ENCODE measurements at regions of chrX and their contacts with region 1.

Region 1: DNA sequence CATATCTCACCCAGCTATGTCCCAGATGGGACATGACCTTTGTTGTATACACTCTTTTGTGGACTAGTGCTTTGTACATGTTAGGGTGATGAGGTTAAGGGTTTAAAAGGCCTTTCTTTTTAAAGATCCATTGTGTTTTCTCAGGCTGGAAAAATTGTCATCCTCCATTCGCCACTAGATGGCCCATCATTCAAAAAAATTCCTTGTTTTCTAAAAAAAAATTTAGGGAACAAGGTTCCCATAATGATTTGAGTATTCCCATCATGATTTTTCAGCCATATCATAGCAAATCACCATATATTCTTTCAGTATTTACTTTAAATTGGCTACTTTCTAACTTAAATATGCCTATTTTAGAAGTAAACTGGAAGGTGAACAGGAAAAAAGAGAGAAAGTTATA is 91.9 kb upstream of the TMEM164 start:
- DNase-seq: no peak
- H3K4me3 ChIP-seq: no peak overlapping the region
- H3K4me3 Mint-ChIP-seq: no peak overlapping the region
- H3K27ac Mint-ChIP-seq: no peak overlapping the region
- H3K4me1 ChIP-seq: peaks cover 5% of the 10 kb centered on the region; the same call in 1 of the 2 replicates
- H3K4me1 Mint-ChIP-seq: no peaks in the 10 kb centered on the region
- H3K27me3 ChIP-seq: no peaks in the 10 kb centered on the region
- H3K27me3 Mint-ChIP-seq: no peaks in the 10 kb centered on the region
- CTCF ChIP-seq: peak; percentile 9 to 43

Region 2: GRCh38 chrX:109472939-109473735 is 437.9 kb before region 1 on chrX:
- CTCF ChIA-PET with region 1: no interaction called
- POLR2A ChIA-PET with region 1: no interaction called
- intact Hi-C with region 1: no loop called
- DNase-seq: peak in 1 of 2 experiments; percentile 15
- H3K4me3 ChIP-seq: no peak overlapping the region
- H3K4me3 Mint-ChIP-seq: no peak overlapping the region
- H3K27ac Mint-ChIP-seq: no peak overlapping the region
- H3K4me1 ChIP-seq: no peaks in the 10 kb centered on the region
- H3K4me1 Mint-ChIP-seq: no peaks in the 10 kb centered on the region
- H3K27me3 ChIP-seq: no peaks in the 10 kb centered on the region
- H3K27me3 Mint-ChIP-seq: no peaks in the 10 kb centered on the region
- CTCF ChIP-seq: no peak

Region 3: DNA sequence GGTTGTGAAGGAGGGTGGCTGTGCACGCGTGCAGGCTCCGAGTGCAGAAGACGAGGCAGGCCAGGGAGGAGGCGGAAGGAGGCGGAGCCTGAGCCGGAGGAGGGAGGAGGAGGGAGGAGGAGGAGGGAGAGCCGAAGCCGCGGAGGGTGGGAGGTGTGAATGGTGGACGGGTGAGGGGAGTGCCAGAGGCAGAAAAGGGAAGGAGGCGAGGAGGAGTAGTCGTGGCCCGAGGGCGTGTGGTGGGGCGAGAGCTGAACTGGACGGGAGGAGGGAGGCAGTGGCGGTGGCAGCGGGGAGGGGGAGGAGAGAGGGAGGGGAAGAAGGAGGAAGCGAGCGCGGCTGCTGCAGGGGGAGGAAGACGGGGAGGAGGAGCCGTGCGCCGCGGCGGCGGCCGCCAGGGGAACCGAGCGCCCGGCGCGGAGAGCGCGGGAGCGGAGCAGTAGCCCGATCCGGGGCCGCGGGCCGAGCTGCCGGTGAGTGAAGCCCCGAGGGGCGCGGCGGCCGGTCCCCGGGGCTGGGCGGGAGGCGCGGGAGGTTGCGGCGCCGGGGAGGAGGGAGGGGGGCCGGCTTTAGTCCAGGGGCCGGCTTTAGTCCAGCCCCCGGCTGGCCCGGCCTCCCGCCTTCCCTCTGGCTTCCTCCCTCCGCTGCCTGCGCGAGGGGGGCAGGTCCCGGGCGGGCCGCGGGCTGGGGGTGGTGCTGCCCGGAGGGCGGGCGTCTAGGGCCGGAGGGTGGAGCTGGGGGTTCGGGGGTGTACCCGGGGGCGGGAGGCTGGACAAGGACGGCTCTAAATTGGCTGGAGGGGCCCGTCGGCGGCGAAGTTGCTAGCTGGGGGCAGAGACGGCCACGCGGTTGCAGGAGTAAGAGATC is 91.5 kb after region 1 on chrX and contains the start of gene TMEM164:
- CTCF ChIA-PET with region 1: no interaction called
- POLR2A ChIA-PET with region 1: no interaction called
- intact Hi-C with region 1: loop called (anchors 5 kb)
- DNase-seq: peak; percentile 76 to 79
- H3K4me3 ChIP-seq: peak within 1 kb of the TSS; percentile 77
- H3K4me3 Mint-ChIP-seq: peak within 1 kb of the TSS; percentile 97
- H3K27ac Mint-ChIP-seq: peak within 1 kb of the TSS; percentile 84
- H3K4me1 ChIP-seq: no peaks in the 10 kb centered on the region
- H3K4me1 Mint-ChIP-seq: peaks cover 7% of the 10 kb centered on the region
- H3K27me3 ChIP-seq: no peaks in the 10 kb centered on the region
- H3K27me3 Mint-ChIP-seq: no peaks in the 10 kb centered on the region
- CTCF ChIP-seq: no peak
- total RNA-seq, gene TMEM164: 25.6 and 26.2 TPM in 2 replicates

Region 4: GRCh38 chrX:110036162-110037033 is 125.4 kb after region 1 on chrX:
- CTCF ChIA-PET with region 1: interaction called, 4 read pairs
- POLR2A ChIA-PET with region 1: no interaction called
- intact Hi-C with region 1: loop called (anchors 5 kb)
- DNase-seq: peak; percentile 60 to 66
- H3K4me3 ChIP-seq: no peak overlapping the region
- H3K4me3 Mint-ChIP-seq: peak overlapping the region; percentile 31
- H3K27ac Mint-ChIP-seq: peak overlapping the region; percentile 44
- H3K4me1 ChIP-seq: peaks cover 17% of the 10 kb centered on the region
- H3K4me1 Mint-ChIP-seq: peaks cover 20% of the 10 kb centered on the region
- H3K27me3 ChIP-seq: no peaks in the 10 kb centered on the region
- H3K27me3 Mint-ChIP-seq: no peaks in the 10 kb centered on the region
- CTCF ChIP-seq: no peak

Region 5: GRCh38 chrX:110125446-110126162 is 214.6 kb after region 1 on chrX:
- CTCF ChIA-PET with region 1: no interaction called
- POLR2A ChIA-PET with region 1: no interaction called
- intact Hi-C with region 1: loop called (anchors 1 kb)
- DNase-seq: peak in 1 of 2 experiments; percentile 30
- H3K4me3 ChIP-seq: no peak overlapping the region
- H3K4me3 Mint-ChIP-seq: no peak overlapping the region
- H3K27ac Mint-ChIP-seq: no peak overlapping the region
- H3K4me1 ChIP-seq: peaks cover 15% of the 10 kb centered on the region; the same call in 1 of the 2 replicates
- H3K4me1 Mint-ChIP-seq: peaks cover 14% of the 10 kb centered on the region
- H3K27me3 ChIP-seq: no peaks in the 10 kb centered on the region
- H3K27me3 Mint-ChIP-seq: no peaks in the 10 kb centered on the region
- CTCF ChIP-seq: peak; percentile 37 to 41

Region 6: GRCh38 chrX:110146521-110146920 is 235.5 kb after region 1 on chrX:
- CTCF ChIA-PET with region 1: interaction called, 7 read pairs
- POLR2A ChIA-PET with region 1: no interaction called
- intact Hi-C with region 1: loop called (anchors 2 kb)
- DNase-seq: peak; percentile 35 to 53
- H3K4me3 ChIP-seq: no peak overlapping the region
- H3K4me3 Mint-ChIP-seq: no peak overlapping the region
- H3K27ac Mint-ChIP-seq: no peak overlapping the region
- H3K4me1 ChIP-seq: no peaks in the 10 kb centered on the region
- H3K4me1 Mint-ChIP-seq: no peaks in the 10 kb centered on the region
- H3K27me3 ChIP-seq: no peaks in the 10 kb centered on the region
- H3K27me3 Mint-ChIP-seq: no peaks in the 10 kb centered on the region
- CTCF ChIP-seq: peak; percentile 37 to 46

Region 7: DNA sequence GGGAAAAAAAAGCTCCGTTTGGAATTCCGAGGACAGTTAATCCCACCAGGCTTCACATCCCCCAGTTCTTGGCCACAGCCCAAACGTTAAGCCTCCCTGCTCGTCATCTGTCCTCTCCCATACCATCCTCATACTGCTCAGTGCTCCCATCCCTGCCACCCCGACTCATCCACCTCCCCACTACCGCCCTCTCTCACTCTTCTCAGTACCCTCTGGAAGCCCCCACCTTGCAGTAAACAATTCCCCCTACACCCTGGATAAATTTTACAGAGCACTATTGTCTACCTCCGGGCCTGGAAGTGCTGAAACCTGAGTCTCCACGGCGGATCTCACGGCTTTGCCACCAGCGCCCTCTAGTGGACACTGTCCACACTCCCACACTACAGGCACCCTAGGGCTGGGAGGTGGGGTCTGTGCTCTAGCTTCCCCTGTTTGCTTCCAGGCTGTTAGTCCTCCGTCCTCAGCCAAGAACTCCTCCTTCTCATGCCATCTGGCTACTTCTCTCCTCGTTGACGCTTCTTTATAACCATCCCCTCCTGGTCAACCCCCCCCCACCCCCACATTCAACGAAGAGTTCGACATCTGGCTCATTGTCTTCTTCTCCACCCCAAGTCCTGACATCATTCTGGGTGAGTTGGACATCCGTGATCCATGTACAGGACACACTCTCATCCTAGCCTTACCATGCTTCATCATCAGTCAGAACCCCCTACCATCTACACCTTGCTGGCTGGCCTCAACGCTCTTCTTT is 502.1 kb after region 1 on chrX:
- CTCF ChIA-PET with region 1: no interaction called
- POLR2A ChIA-PET with region 1: no interaction called
- intact Hi-C with region 1: loop called (anchors 10 kb)
- DNase-seq: peak; percentile 53 to 66
- H3K4me3 ChIP-seq: no peak overlapping the region
- H3K4me3 Mint-ChIP-seq: no peak overlapping the region
- H3K27ac Mint-ChIP-seq: no peak overlapping the region
- H3K4me1 ChIP-seq: no peaks in the 10 kb centered on the region
- H3K4me1 Mint-ChIP-seq: no peaks in the 10 kb centered on the region
- H3K27me3 ChIP-seq: no peaks in the 10 kb centered on the region
- H3K27me3 Mint-ChIP-seq: no peaks in the 10 kb centered on the region
- CTCF ChIP-seq: peak; percentile 69 to 81